Head of caudate nucleus (tissue), 42 donors: ENCODE measurements at regions of chr14 and their contacts with region 1.

Region 1: GRCh38 chr14:47917345-47917954 is 242.0 kb upstream of the MDGA2 start:
- DNase-seq: peak in 33 of 42 donors; percentile 5 to 80 (median 48)

Region 2: GRCh38 chr14:47557894-47558293 is 359.6 kb before region 1 on chr14:
- intact Hi-C with region 1: no loop called
- DNase-seq: no peak

Region 3: GRCh38 chr14:48398675-48399282 is 481.3 kb after region 1 on chr14:
- intact Hi-C with region 1: loop called (anchors 5 kb)
- DNase-seq: peak in 10 of 42 donors; percentile 3 to 61 (median 23)